Aorta (tissue), 5 donors: ENCODE measurements at regions of chr9 and their contacts with region 1.

Region 1: DNA sequence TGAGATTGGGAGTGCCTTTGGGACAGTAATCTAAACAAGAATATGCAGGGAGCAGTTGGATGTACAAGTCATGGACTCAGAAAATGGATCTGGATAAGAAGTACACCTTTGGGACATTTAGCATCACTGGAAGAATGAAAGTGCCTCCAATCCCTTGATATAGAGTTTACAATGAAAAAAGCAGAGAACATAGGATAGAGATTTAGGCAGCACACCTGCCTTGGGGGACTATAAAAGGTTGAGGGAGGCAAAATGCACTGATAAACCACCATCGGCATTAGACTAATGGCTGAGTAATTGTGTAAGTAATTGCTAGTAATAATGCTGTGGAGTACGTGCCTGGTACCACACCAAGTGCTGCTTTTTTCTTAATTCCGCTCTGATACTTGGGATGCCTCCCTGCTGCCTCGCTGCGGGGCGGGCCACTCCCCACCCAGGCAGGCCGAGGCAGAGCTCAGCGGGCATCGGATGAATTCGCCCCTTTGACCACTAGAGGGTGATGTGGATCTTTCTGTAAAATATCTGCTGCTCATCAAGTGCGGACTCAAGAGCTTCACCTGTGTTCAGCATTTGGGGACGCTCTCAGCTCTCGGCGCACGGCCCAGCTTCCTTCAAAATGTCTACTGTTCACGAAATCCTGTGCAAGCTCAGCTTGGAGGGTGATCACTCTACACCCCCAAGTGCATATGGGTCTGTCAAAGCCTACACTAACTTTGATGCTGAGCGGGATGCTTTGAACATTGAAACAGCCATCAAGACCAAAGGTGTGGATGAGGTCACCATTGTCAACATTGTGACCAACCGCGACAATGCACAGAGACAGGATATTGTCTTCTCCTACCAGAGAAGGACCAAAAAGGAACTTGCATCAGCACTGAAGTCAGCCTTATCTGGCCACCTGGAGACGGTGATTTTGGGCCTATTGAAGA is 99.9 kb downstream of the ANKRD18B start:
- DNase-seq: peak in 1 of 2 donors; percentile 58
- ATAC-seq: peak; percentile 79
- H3K4me3 ChIP-seq: no peak overlapping the region
- H3K27ac ChIP-seq: no peak overlapping the region
- H3K4me1 ChIP-seq: no peaks in the 10 kb centered on the region
- H3K27me3 ChIP-seq: no peaks in the 10 kb centered on the region

Region 2: GRCh38 chr9:33721674-33722358 is 97.9 kb after region 1 on chr9:
- intact Hi-C with region 1: loop called (anchors 1 to 2 kb)
- DNase-seq: peak; percentile 86 to 96
- ATAC-seq: peak; percentile 94
- H3K4me3 ChIP-seq: no peak overlapping the region
- H3K27ac ChIP-seq: no peak overlapping the region
- H3K4me1 ChIP-seq: no peaks in the 10 kb centered on the region
- H3K27me3 ChIP-seq: no peaks in the 10 kb centered on the region

Region 3: GRCh38 chr9:33884856-33885701 is 261.2 kb after region 1 on chr9:
- intact Hi-C with region 1: no loop called
- DNase-seq: no peak
- ATAC-seq: no peak
- H3K4me3 ChIP-seq: no peak overlapping the region
- H3K27ac ChIP-seq: no peak overlapping the region
- H3K4me1 ChIP-seq: peaks cover 0 to 5% of the 10 kb centered on the region in 2 donors
- H3K27me3 ChIP-seq: no peaks in the 10 kb centered on the region

Region 4: GRCh38 chr9:34400275-34400674 is 776.4 kb after region 1 on chr9:
- intact Hi-C with region 1: no loop called
- DNase-seq: no peak
- ATAC-seq: no peak
- H3K4me3 ChIP-seq: no peak overlapping the region
- H3K27ac ChIP-seq: no peak overlapping the region
- H3K4me1 ChIP-seq: no peaks in the 10 kb centered on the region
- H3K27me3 ChIP-seq: no peaks in the 10 kb centered on the region